Activated CD8-positive, alpha-beta T cell treated with anti-CD3 and anti-CD28 coated beads for 36 hours (primary cell): ENCODE measurements at regions of chr3 and their contacts with region 1.

Region 1: GRCh38 chr3:176939022-176939817 is 258.1 kb downstream of the TBL1XR1 start:
- DNase-seq: peak; percentile 20
- ATAC-seq: peak; percentile 84
- H3K4me3 Mint-ChIP-seq: no peak overlapping the region
- H3K27ac Mint-ChIP-seq: no peak overlapping the region
- H3K4me1 Mint-ChIP-seq: no peaks in the 10 kb centered on the region
- H3K27me3 Mint-ChIP-seq: peaks cover 4% of the 10 kb centered on the region
- CTCF ChIP-seq: peak; percentile 80

Region 2: GRCh38 chr3:176514297-176514696 is 424.9 kb before region 1 on chr3:
- CTCF ChIA-PET with region 1: no interaction called
- POLR2A ChIA-PET with region 1: no interaction called
- intact Hi-C with region 1: loop called (anchors 10 kb)
- DNase-seq: peak; percentile 27
- ATAC-seq: no peak
- H3K4me3 Mint-ChIP-seq: no peak overlapping the region
- H3K27ac Mint-ChIP-seq: no peak overlapping the region
- H3K4me1 Mint-ChIP-seq: no peaks in the 10 kb centered on the region
- H3K27me3 Mint-ChIP-seq: no peaks in the 10 kb centered on the region
- CTCF ChIP-seq: peak; percentile 50

Region 3: GRCh38 chr3:176824811-176825210 is 114.4 kb before region 1 on chr3:
- CTCF ChIA-PET with region 1: no interaction called
- POLR2A ChIA-PET with region 1: no interaction called
- intact Hi-C with region 1: no loop called
- DNase-seq: no peak
- ATAC-seq: no peak
- H3K4me3 Mint-ChIP-seq: no peak overlapping the region
- H3K27ac Mint-ChIP-seq: no peak overlapping the region
- H3K4me1 Mint-ChIP-seq: no peaks in the 10 kb centered on the region
- H3K27me3 Mint-ChIP-seq: no peaks in the 10 kb centered on the region
- CTCF ChIP-seq: no peak

Region 4: GRCh38 chr3:176872771-176873209 is 66.4 kb before region 1 on chr3:
- CTCF ChIA-PET with region 1: interaction called, 49 read pairs
- POLR2A ChIA-PET with region 1: no interaction called
- intact Hi-C with region 1: loop called (anchors 2 kb)
- DNase-seq: peak; percentile 75
- ATAC-seq: peak; percentile 98
- H3K4me3 Mint-ChIP-seq: no peak overlapping the region
- H3K27ac Mint-ChIP-seq: peak overlapping the region; percentile 85
- H3K4me1 Mint-ChIP-seq: peaks cover 4% of the 10 kb centered on the region
- H3K27me3 Mint-ChIP-seq: no peaks in the 10 kb centered on the region
- CTCF ChIP-seq: peak; percentile 58

Region 5: DNA sequence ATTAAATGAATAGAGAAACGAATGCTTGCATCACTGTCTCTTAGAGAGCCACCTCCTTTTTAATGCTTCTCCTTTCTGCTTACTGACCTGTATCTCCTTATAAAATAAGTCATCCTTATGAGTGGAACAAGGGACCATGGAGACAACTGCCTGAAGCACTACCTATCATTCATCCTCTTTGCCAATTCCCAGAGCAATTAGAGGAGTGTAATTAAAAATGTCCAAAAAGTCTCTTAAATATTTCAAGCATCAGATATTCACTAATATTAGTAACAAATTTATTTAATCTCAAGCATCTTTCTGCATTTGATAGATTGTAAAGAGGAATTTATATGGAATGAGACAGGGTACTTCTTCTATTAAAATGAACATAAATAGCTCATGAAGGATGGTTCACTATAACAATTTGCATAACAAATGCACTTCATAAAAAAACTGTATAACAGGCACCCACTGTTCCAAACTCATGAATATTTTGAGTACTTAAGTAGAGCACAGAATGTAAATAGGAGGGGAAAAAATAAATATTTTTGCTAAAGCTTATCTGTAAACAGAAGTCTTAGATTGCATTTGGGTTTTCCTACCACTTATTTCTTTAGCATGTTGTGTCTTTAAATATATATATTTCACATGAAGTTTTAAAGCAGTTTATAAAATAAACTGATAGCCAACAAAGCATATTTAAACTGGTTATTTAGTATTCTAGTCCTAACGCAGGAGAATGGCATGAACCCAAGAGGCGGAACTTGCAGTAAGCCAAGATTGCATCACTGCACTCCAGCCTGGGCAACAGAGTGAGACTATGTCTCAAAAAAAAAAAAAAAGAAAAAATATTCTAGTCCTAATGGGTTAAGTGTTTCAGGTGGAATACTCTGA is 11.3 kb before region 1 on chr3:
- CTCF ChIA-PET with region 1: interaction called, 11 read pairs
- POLR2A ChIA-PET with region 1: no interaction called
- intact Hi-C with region 1: no loop called
- DNase-seq: no peak
- ATAC-seq: no peak
- H3K4me3 Mint-ChIP-seq: no peak overlapping the region
- H3K27ac Mint-ChIP-seq: no peak overlapping the region
- H3K4me1 Mint-ChIP-seq: no peaks in the 10 kb centered on the region
- H3K27me3 Mint-ChIP-seq: peaks cover 4% of the 10 kb centered on the region
- CTCF ChIP-seq: no peak